PC-3 (cell line): ENCODE measurements at regions of chr1 and their contacts with region 1.

Region 1: GRCh38 chr1:175154629-175155472 is 37.7 kb downstream of the KIAA0040 start:
- DNase-seq: peak; percentile 82
- ATAC-seq: peak; percentile 16; the same call in 1 of the 2 replicates
- H3K4me3 ChIP-seq: no peak overlapping the region
- H3K27ac ChIP-seq: no peak overlapping the region
- H3K4me1 ChIP-seq: peaks cover 29% of the 10 kb centered on the region
- H3K27me3 ChIP-seq: no peaks in the 10 kb centered on the region
- CTCF ChIP-seq: peak; percentile 78

Region 2: GRCh38 chr1:175197536-175197935 is 42.7 kb after region 1 on chr1:
- CTCF ChIA-PET with region 1: interaction called, 3 read pairs
- POLR2A ChIA-PET with region 1: no interaction called
- intact Hi-C with region 1: loop called (anchors 5 kb)
- DNase-seq: peak; percentile 93
- ATAC-seq: peak; percentile 56
- H3K4me3 ChIP-seq: no peak overlapping the region
- H3K27ac ChIP-seq: peak overlapping the region; percentile 99
- H3K4me1 ChIP-seq: peaks cover 49% of the 10 kb centered on the region
- H3K27me3 ChIP-seq: no peaks in the 10 kb centered on the region
- CTCF ChIP-seq: no peak

Region 3: DNA sequence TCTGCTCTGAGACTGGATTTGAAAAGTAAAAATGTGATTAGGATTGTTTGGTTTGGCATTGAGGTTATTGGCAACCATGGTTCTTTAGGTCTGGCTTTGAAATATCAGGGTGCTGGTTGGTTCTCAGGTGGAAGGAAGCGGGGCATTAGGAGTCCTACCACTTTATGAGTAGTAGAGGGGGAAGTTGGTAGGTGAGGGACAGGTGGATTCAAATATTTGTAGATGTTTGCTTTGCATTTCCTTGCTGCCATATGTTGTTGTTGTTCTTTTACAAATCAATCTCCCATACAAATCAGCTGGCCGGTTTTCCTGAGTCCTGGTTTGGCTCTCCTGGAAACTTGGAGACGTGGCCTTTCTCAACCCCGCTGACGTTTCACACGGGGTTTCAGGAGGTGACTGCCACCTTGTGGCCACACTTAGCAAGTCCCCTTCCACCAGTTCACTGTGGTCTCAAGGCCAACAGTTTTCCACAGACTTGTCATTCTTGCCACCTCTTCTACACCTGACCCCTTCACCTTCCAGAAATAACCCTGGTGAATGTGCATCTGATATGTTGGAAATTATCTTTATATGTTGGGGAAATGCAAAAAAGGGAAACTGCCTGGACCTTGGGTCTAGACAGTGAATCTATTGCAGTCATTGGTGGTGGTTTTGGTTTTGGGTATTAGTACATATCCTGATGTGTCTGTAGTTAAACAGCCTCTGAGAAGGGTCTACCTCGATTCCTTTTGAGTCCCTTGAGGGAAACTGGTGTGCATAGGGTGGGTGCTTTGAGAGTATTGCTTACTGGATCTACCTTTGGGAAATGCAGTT is 164.8 kb after region 1 on chr1:
- CTCF ChIA-PET with region 1: interaction called, 21 read pairs
- POLR2A ChIA-PET with region 1: no interaction called
- intact Hi-C with region 1: loop called (anchors 1 kb)
- DNase-seq: peak; percentile 79
- ATAC-seq: peak; percentile 88
- H3K4me3 ChIP-seq: no peak overlapping the region
- H3K27ac ChIP-seq: no peak overlapping the region
- H3K4me1 ChIP-seq: peaks cover 9% of the 10 kb centered on the region
- H3K27me3 ChIP-seq: no peaks in the 10 kb centered on the region
- CTCF ChIP-seq: peak; percentile 79

Region 4: DNA sequence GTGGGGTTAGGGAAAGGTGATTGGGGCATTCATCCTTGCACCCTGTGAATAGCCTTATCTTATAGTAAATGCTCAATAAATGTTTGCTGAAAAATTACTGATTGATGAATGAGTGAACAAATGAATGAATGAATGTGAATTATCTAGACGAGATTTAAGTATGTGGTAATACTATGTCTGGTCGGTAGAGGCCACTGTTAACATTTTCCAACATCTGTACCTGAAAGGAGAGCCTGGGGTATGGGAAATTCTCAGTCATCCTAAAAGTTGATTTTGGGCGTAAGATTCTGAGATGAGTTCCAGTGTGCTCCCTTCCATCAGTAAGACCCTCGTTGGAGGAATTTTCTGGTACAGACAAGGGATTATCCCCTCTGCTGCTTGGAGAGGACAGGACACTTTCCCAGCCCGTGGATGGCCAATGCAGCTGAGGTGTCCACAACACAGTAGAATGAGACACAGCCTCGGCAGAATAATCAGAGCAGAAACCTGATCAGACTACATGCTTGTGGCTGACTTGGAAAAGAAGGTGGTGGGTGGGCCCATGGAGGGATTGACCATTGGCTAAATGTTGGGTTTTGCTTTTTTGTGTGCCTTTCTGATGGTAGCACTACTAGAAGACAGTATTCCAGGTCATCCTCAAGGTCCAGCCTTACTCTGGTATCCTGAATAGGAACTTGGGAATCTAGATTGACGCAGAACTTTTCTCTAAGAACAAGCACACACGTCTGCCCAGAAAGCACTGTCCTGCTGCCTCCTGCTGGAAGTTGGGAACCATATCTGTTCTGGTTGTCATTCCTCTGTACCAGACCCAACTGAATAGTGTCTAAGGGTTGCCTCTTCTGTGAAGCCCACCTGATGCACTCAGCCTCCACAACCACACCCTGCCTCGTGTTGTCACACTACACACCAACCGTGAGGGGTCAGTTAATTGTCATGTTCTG is 326.5 kb after region 1 on chr1:
- CTCF ChIA-PET with region 1: no interaction called
- POLR2A ChIA-PET with region 1: no interaction called
- intact Hi-C with region 1: loop called (anchors 2 kb)
- DNase-seq: peak; percentile 38
- ATAC-seq: no peak
- H3K4me3 ChIP-seq: no peak overlapping the region
- H3K27ac ChIP-seq: no peak overlapping the region
- H3K4me1 ChIP-seq: no peaks in the 10 kb centered on the region
- H3K27me3 ChIP-seq: no peaks in the 10 kb centered on the region
- CTCF ChIP-seq: peak; percentile 54